ENCODE measurements at regions of chr6 and their contacts with region 1.

Region 1: DNA sequence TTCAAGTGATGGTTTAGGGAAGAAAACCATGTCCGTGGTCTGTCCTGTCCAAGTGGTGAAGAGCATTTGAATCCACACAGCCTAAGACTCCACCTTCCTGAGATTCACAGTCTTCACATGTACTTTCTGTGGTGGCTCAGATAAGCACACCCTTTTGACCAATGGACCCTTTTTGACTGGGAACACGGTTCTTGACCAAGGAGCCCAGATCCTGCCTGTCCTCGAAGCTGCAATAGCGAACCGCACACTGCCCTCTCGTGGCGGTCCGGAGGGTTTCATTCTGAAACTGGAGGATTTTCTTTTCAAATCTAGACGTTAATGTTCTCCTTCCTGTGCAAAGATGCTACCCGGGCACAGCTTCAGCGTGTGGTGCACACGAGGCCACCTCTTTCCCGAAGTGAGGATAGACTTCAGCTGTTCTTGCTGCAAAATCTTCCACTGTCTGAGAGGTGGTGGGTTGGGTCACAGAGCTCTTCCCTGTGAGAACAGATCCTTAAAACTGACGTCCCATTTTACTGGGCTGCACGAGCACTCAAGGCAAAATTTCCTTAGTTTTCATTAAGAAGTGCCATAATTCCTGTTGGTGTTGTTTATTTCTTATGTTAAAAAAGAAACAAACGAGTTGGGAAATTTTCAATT is 90.5 kb downstream of the SYNJ2 start:
- DNase-seq: peak; percentile 28 to 69 (median 65)
- ATAC-seq: peak; percentile 85
- H3K4me3 ChIP-seq: no peak overlapping the region
- H3K4me3 Mint-ChIP-seq: no peak overlapping the region
- H3K27ac ChIP-seq: no peak overlapping the region
- H3K27ac Mint-ChIP-seq: peak overlapping the region; percentile 32 to 91 (median 55)
- H3K4me1 ChIP-seq: peaks cover 0 to 5% of the 10 kb centered on the region in 2 donors
- H3K4me1 Mint-ChIP-seq: peaks cover 5 to 31% (median 6%) of the 10 kb centered on the region in 7 donors
- H3K27me3 ChIP-seq: no peaks in the 10 kb centered on the region
- H3K27me3 Mint-ChIP-seq: no peaks in the 10 kb centered on the region

Region 2: DNA sequence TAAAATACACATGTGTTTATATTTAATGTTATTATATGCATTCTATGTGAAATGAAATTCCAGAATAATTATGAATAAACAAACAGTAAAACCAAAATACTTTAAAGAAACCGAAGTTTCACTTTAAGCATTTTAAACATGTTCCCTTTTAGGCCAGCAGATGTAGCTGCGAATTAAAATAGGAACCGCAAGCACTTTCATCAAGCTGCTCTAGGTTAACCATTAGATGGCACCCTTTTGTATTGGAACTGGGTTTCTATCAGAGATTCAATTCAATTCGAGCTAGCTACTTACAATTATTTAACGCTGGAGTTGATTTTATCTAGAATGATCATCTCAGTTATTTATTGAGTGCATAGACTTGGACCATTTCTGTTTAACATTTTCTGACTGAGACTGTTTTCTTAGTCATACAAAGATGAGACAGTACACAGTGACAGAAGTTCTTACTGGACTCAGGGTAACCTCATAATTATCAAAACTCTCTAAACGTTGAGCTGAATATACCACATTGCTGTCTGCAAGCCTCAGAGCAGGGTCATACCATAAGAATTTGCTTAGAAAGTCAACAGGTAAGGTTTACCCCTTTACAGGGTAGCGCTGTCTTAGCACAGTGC is 757.4 kb before region 1 on chr6:
- CTCF ChIA-PET with region 1: no interaction called
- POLR2A ChIA-PET with region 1: no interaction called
- intact Hi-C with region 1: loop called (anchors 1 to 5 kb)
- DNase-seq: peak in 7 of 9 donors; percentile 43 to 65 (median 52)
- ATAC-seq: peak; percentile 87
- H3K4me3 ChIP-seq: no peak overlapping the region
- H3K4me3 Mint-ChIP-seq: no peak overlapping the region
- H3K27ac ChIP-seq: no peak overlapping the region
- H3K27ac Mint-ChIP-seq: peak overlapping the region in 3 of 9 donors; percentile 16 to 48 (median 33)
- H3K4me1 ChIP-seq: no peaks in the 10 kb centered on the region
- H3K4me1 Mint-ChIP-seq: peaks cover 0 to 22% (median 6%) of the 10 kb centered on the region in 7 donors
- H3K27me3 ChIP-seq: no peaks in the 10 kb centered on the region
- H3K27me3 Mint-ChIP-seq: no peaks in the 10 kb centered on the region

Region 3: DNA sequence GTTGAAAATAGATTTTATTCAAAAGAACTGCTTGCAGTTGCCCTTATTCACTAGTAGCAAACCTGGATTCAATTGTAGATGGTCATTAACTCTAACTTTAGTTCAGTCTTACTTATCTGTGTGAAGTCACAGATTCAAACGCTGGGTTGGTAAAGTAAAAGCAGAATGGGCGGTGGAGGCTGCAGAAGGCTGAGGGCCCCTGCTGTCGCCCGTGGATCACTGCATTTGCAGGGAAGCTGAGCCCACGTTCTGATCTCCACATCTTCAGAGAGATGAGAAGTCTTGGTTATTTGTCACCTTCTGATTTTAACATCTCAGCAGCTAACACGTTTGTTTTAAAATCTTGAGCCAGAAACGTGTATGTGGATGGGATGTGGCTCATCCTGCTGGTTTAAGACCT is 174.0 kb before region 1 on chr6:
- CTCF ChIA-PET with region 1: interaction called, 4 read pairs
- POLR2A ChIA-PET with region 1: no interaction called
- intact Hi-C with region 1: loop called in 1 of 2 experiments (anchors 10 kb)
- DNase-seq: peak in 7 of 9 donors; percentile 39 to 68 (median 48)
- ATAC-seq: peak; percentile 55
- H3K4me3 ChIP-seq: no peak overlapping the region
- H3K4me3 Mint-ChIP-seq: no peak overlapping the region
- H3K27ac ChIP-seq: no peak overlapping the region
- H3K27ac Mint-ChIP-seq: peak overlapping the region in 8 of 9 donors; percentile 6 to 92 (median 50)
- H3K4me1 ChIP-seq: peaks cover 0 to 12% of the 10 kb centered on the region in 2 donors
- H3K4me1 Mint-ChIP-seq: peaks cover 5 to 40% (median 26%) of the 10 kb centered on the region in 7 donors
- H3K27me3 ChIP-seq: no peaks in the 10 kb centered on the region
- H3K27me3 Mint-ChIP-seq: no peaks in the 10 kb centered on the region

Region 4: DNA sequence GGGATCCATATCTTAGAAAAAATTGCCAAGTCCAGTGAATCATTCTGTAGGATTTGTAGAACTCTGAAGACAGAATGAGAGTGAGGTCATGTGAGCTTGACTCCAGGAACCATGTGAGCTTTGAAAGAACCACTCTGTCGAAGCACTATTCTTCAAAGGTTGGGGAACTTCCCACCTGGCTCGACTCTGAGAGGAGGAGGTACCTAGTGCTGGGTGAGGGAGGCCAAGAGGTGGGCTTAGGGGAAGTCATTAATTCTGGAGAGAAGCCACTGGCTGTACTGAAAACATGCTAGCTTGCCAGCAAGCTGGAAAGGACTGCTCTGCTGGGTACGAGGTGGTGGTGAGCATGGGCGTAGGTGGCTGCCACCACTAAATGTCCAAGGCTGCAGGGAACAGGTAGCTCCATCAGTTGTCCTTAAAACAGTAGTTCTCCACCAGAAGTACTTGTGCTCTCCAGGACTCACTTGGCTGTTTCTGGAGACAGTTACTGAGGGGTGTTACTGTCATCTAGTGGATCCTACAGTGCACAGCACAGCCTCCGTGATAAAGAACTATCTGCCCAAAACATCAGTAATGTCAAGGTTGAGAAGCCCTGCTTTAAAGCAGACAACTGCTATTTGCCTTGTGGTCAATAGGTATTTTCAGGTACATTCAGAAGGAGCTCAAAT is 125.2 kb before region 1 on chr6:
- CTCF ChIA-PET with region 1: interaction called, 3 read pairs
- POLR2A ChIA-PET with region 1: no interaction called
- intact Hi-C with region 1: loop called in 1 of 2 experiments (anchors 5 kb)
- DNase-seq: peak in 6 of 9 donors; percentile 11 to 51 (median 32)
- ATAC-seq: peak; percentile 72
- H3K4me3 ChIP-seq: no peak overlapping the region
- H3K4me3 Mint-ChIP-seq: peak overlapping the region in 1 of 10 donors; percentile 42
- H3K27ac ChIP-seq: no peak overlapping the region
- H3K27ac Mint-ChIP-seq: peak overlapping the region in 8 of 9 donors; percentile 8 to 88 (median 52)
- H3K4me1 ChIP-seq: no peaks in the 10 kb centered on the region
- H3K4me1 Mint-ChIP-seq: peaks cover 0 to 24% (median 5%) of the 10 kb centered on the region in 7 donors
- H3K27me3 ChIP-seq: no peaks in the 10 kb centered on the region
- H3K27me3 Mint-ChIP-seq: peaks cover 0 to 20% (median 0%) of the 10 kb centered on the region in 5 donors

Region 5: DNA sequence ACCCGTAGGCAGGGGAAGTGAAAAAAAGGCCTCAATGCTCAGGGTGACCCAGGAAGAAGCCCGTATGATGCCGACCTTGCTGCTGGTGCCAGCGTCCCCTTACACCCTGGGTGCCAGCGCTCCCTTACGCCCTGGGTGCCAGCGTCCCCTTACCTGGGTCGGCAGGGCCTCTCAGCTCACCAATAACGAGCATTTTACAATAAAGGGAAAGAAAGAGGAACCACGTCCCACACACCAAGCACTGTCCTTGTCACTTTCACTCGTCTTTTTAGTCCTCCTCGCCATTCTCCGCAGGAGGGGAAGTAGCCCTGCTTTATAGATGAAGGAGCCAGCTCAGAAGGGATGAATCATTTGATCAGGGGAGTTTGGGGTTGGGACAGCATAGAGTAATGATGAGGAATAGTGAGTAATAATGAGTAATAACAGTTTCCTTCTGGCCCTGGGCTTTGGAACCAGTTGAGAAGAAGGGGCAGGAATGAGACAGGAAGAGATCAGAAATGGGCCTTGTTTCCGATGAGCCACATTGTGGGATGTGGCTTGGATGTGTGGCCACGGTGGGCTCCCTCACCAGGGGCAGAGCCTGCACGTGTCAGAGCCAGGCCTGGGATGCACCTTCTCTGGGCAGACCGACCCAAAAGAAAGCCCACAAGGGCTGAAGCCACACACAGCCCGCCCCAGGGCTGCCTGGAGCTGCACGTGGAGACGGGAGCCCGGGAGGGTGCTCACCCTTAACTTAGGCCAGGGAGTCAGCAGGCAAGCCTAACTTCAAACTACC is 14.8 kb before region 1 on chr6:
- CTCF ChIA-PET with region 1: interaction called, 20 read pairs
- POLR2A ChIA-PET with region 1: interaction called, 5 read pairs
- intact Hi-C with region 1: loop called in 1 of 2 experiments (anchors 1 kb)
- DNase-seq: peak in 1 of 9 donors; percentile 43
- ATAC-seq: peak; percentile 83
- H3K4me3 ChIP-seq: no peak overlapping the region
- H3K4me3 Mint-ChIP-seq: peak overlapping the region in 3 of 10 donors; percentile 4 to 46 (median 29)
- H3K27ac ChIP-seq: no peak overlapping the region
- H3K27ac Mint-ChIP-seq: peak overlapping the region in 8 of 9 donors; percentile 49 to 85 (median 70)
- H3K4me1 ChIP-seq: peaks cover 3 to 21% of the 10 kb centered on the region in 2 donors
- H3K4me1 Mint-ChIP-seq: peaks cover 16 to 36% (median 31%) of the 10 kb centered on the region in 7 donors
- H3K27me3 ChIP-seq: no peaks in the 10 kb centered on the region
- H3K27me3 Mint-ChIP-seq: no peaks in the 10 kb centered on the region

Region 6: GRCh38 chr6:158452182-158452581 is 380.0 kb after region 1 on chr6:
- CTCF ChIA-PET with region 1: no interaction called
- POLR2A ChIA-PET with region 1: no interaction called
- intact Hi-C with region 1: no loop called
- DNase-seq: no peak
- ATAC-seq: no peak
- H3K4me3 ChIP-seq: no peak overlapping the region
- H3K4me3 Mint-ChIP-seq: no peak overlapping the region
- H3K27ac ChIP-seq: no peak overlapping the region
- H3K27ac Mint-ChIP-seq: no peak overlapping the region
- H3K4me1 ChIP-seq: no peaks in the 10 kb centered on the region
- H3K4me1 Mint-ChIP-seq: no peaks in the 10 kb centered on the region
- H3K27me3 ChIP-seq: no peaks in the 10 kb centered on the region
- H3K27me3 Mint-ChIP-seq: no peaks in the 10 kb centered on the region

Measured in naive thymus-derived CD4-positive, alpha-beta T cell (primary cell).